Ascending aorta (tissue), 2 donors: ENCODE measurements at regions of chr15 and their contacts with region 1.

Region 1: GRCh38 chr15:57522148-57522547 is 69.6 kb upstream of the MYZAP start:
- DNase-seq: no peak
- H3K4me3 ChIP-seq: no peak overlapping the region
- H3K27ac ChIP-seq: no peak overlapping the region
- H3K4me1 ChIP-seq: no peaks in the 10 kb centered on the region
- H3K27me3 ChIP-seq: no peaks in the 10 kb centered on the region
- CTCF ChIP-seq: no peak

Region 2: GRCh38 chr15:57251941-57252340 is 270.2 kb before region 1 on chr15:
- intact Hi-C with region 1: no loop called
- DNase-seq: no peak
- H3K4me3 ChIP-seq: no peak overlapping the region
- H3K27ac ChIP-seq: no peak overlapping the region
- H3K4me1 ChIP-seq: peaks cover 0 to 3% of the 10 kb centered on the region in 2 donors
- H3K27me3 ChIP-seq: no peaks in the 10 kb centered on the region
- CTCF ChIP-seq: no peak

Region 3: GRCh38 chr15:57462381-57462780 is 59.8 kb before region 1 on chr15:
- intact Hi-C with region 1: loop called (anchors 5 kb)
- DNase-seq: no peak
- H3K4me3 ChIP-seq: no peak overlapping the region
- H3K27ac ChIP-seq: no peak overlapping the region
- H3K4me1 ChIP-seq: no peaks in the 10 kb centered on the region
- H3K27me3 ChIP-seq: no peaks in the 10 kb centered on the region
- CTCF ChIP-seq: peak in 2 of 3 experiments; percentile 22 to 31

Region 4: DNA sequence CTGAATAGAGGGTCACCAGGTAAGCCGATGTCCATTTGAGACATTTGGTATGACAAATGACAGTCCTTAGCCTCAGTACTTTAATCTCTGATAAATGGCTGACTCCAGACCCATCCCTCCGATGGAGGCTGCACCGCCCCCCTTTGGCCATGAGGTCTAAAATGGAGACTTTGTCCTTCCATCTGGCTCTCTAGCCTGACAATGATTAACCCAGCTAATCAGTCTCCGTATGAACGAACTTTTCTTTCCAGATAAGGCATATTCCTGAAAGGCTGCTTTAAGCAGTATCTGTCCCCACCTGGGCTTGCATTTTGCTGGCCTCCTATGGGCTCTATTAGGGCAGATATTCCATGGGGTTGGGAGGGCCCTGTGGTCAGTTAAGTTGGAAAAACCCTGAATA is 58.7 kb after region 1 on chr15:
- intact Hi-C with region 1: no loop called
- DNase-seq: no peak
- H3K4me3 ChIP-seq: no peak overlapping the region
- H3K27ac ChIP-seq: no peak overlapping the region
- H3K4me1 ChIP-seq: no peaks in the 10 kb centered on the region
- H3K27me3 ChIP-seq: no peaks in the 10 kb centered on the region
- CTCF ChIP-seq: no peak